Heart right ventricle (tissue), 16 donors: ENCODE measurements at regions of chr5 and their contacts with region 1.

Region 1: GRCh38 chr5:128844354-128844923 is 120.8 kb upstream of the SLC27A6 start:
- DNase-seq: no peak
- ATAC-seq: no peak
- H3K4me3 ChIP-seq: no peak overlapping the region
- H3K27ac ChIP-seq: no peak overlapping the region
- H3K4me1 ChIP-seq: no peaks in the 10 kb centered on the region
- H3K27me3 ChIP-seq: no peaks in the 10 kb centered on the region
- CTCF ChIP-seq: peak; percentile 14 to 63 (median 46)

Region 2: DNA sequence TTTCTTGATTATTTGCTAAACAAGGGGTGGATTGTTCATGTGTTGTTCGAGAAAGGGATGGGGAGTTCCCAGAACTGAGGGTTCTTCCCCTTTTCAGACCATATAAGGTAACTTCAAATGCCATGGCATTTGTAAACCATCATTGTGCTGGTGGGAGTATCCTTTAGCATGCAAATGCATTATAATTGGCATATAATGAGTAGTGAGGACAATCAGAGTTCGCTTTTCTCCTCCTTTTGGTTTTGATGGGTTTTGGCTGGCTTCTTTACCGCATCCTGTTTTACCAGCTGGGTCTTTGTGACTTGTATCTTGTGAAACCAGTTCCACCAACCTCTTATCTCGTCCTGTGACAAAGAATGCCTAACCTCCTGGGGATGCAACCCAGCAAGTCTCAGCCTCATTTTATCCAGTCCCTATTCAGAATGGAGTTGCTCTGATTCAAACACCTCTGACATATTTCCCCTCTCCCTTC is 297.7 kb before region 1 on chr5:
- intact Hi-C with region 1: loop called in 1 of 10 experiments (anchors 10 kb)
- DNase-seq: no peak
- ATAC-seq: no peak
- H3K4me3 ChIP-seq: no peak overlapping the region
- H3K27ac ChIP-seq: no peak overlapping the region
- H3K4me1 ChIP-seq: no peaks in the 10 kb centered on the region
- H3K27me3 ChIP-seq: peaks cover 0 to 2% (median 0%) of the 10 kb centered on the region in 7 donors
- CTCF ChIP-seq: no peak

Region 3: GRCh38 chr5:128667152-128667551 is 177.3 kb before region 1 on chr5:
- intact Hi-C with region 1: loop called in 8 of 10 experiments (anchors 5 to 10 kb)
- DNase-seq: no peak
- ATAC-seq: no peak
- H3K4me3 ChIP-seq: no peak overlapping the region
- H3K27ac ChIP-seq: no peak overlapping the region
- H3K4me1 ChIP-seq: no peaks in the 10 kb centered on the region
- H3K27me3 ChIP-seq: no peaks in the 10 kb centered on the region
- CTCF ChIP-seq: peak in 6 of 9 donors; percentile 19 to 51 (median 36)